ENCODE measurements at regions of chr11 and their contacts with region 1.

Region 1: DNA sequence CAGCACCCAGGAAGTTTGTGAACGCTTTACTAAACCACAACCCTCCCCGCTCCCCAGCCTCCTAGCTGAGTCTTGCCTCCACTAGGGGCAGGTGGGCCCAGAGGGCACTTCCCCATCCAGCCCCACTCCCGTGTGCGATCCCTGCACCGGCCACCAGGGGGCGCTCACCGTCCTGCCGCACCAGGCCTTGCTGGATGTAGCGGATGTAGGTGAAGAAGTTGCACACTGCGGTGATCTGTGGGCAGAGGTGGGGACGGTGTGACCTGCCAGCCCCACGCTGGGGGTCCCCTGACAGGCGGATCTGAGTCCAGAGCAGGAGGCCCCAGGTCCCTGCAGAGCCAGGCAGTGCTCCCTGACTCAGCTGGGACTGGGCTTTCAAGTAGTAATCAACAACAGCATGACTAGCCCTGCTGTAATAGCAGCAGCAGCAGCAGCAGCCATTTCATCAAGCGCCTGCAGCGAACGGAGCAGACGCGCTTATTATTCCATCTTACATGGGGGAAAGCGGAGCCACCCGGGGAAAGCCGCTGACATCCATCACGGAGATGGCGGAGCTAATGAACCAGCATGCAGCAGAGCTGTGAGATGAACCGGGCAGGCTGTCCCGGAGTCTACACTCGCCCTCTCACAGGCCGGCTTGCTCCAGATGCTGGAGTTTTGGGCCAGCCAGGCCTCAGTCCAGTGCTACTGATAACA is 7.9 kb upstream of the FADS3 start:
- DNase-seq: peak; percentile 98
- H3K4me3 Mint-ChIP-seq: no peak overlapping the region
- H3K27ac Mint-ChIP-seq: peak overlapping the region; percentile 30
- H3K4me1 Mint-ChIP-seq: peaks cover 4% of the 10 kb centered on the region
- H3K27me3 Mint-ChIP-seq: peaks cover 3% of the 10 kb centered on the region

Region 2: DNA sequence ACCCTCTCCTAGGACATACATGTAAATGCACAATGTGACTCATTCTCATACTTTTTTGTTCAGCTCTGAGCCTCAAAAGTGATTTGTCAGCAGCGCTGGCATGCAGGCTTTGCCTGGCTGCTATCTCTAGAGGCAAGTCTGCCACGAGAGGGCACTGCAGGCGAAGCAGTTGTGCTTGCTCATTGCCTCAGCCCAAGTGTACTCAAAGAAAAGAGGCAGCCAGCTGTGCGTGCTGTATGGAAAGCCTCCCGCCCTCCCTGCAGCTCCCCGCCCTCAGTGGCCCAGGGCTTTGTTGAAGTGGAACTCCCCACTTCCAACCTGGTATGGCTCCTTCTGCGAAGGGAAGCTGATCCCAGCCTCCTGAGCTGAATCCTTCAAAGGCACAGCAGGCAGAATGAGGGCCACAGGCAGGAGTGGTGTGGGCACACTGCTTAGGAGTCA is 453.1 kb before region 1 on chr11:
- intact Hi-C with region 1: no loop called
- DNase-seq: peak; percentile 93
- H3K4me3 Mint-ChIP-seq: no peak overlapping the region
- H3K27ac Mint-ChIP-seq: peak overlapping the region; percentile 37
- H3K4me1 Mint-ChIP-seq: peaks cover 21% of the 10 kb centered on the region
- H3K27me3 Mint-ChIP-seq: no peaks in the 10 kb centered on the region

Region 3: GRCh38 chr11:61947486-61948210 is 48.4 kb after region 1 on chr11:
- intact Hi-C with region 1: loop called (anchors 1 kb)
- DNase-seq: peak; percentile 91
- H3K4me3 Mint-ChIP-seq: no peak overlapping the region
- H3K27ac Mint-ChIP-seq: no peak overlapping the region
- H3K4me1 Mint-ChIP-seq: peaks cover 2% of the 10 kb centered on the region
- H3K27me3 Mint-ChIP-seq: peaks cover 8% of the 10 kb centered on the region

Region 4: GRCh38 chr11:62081378-62082291 is 182.3 kb after region 1 on chr11:
- intact Hi-C with region 1: loop called (anchors 1 kb)
- DNase-seq: peak; percentile 93
- H3K4me3 Mint-ChIP-seq: peak overlapping the region; percentile 17
- H3K27ac Mint-ChIP-seq: no peak overlapping the region
- H3K4me1 Mint-ChIP-seq: peaks cover 6% of the 10 kb centered on the region
- H3K27me3 Mint-ChIP-seq: peaks cover 6% of the 10 kb centered on the region

Region 5: GRCh38 chr11:62201370-62201769 is 302.1 kb after region 1 on chr11:
- intact Hi-C with region 1: loop called (anchors 10 kb)
- DNase-seq: no peak
- H3K4me3 Mint-ChIP-seq: no peak overlapping the region
- H3K27ac Mint-ChIP-seq: no peak overlapping the region
- H3K4me1 Mint-ChIP-seq: peaks cover 2% of the 10 kb centered on the region
- H3K27me3 Mint-ChIP-seq: peaks cover 24% of the 10 kb centered on the region

Measured in activated CD4-positive, alpha-beta T cell treated with anti-CD3 and anti-CD28 coated beads, Interleukin-2, amount 10 ng/mL, durations not matched to agents 24 days and 14 days (primary cell).